MCF 10A (cell line): ENCODE measurements at regions of chr18 and their contacts with region 1.

Region 1: DNA sequence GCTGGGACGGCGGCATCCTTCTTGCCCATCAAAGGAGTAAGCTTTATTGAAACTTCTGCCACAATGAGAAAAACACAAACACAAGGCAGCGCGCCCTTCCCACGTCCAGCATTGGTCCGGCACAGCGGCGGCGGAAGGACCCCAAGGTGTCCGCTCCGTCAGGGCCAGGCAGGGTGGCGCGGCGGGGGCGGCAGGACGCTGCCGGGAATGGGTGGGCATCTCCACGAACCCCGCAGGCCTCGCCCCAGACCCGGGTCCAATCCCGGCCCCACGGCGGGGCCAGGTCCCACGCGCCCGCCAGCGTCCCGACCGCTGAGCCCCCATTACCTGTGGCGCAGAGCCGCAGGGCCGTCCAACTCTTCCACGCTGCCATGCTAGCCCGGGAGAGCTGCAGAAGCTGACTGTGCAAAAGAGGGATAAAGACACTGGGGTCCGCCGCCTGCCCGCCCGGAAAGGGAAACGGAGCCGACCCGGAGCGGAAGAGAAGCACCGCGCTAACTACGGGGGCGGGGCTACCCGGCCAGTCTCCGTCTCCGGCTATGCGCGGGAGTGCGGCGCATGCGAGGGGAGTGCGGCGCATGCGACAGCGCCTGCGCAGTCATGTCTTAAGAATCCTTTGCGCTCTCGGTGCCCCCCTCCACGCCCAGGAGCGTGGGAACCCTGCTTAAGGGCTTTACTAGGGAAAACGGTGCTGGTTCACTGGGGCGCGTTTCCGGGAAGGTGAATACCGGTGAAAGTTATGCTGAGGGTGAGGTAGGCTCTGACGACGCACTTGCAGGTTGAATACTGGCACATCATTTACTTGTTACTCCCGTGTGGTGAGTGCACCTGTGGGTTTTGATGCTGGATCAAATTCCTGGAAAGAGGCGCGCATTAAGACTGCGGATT is at the start of gene TMX3:
- DNase-seq: peak; percentile 92
- H3K4me3 Mint-ChIP-seq: peak within 1 kb of the TSS; percentile 95
- H3K27ac Mint-ChIP-seq: peak within 1 kb of the TSS; percentile 70
- H3K4me1 Mint-ChIP-seq: peaks cover 19% of the 10 kb centered on the region
- H3K27me3 Mint-ChIP-seq: no peaks in the 10 kb centered on the region
- CTCF ChIP-seq: no peak
- total RNA-seq, gene TMX3: 88.7 and 95.0 TPM in 2 replicates

Region 2: DNA sequence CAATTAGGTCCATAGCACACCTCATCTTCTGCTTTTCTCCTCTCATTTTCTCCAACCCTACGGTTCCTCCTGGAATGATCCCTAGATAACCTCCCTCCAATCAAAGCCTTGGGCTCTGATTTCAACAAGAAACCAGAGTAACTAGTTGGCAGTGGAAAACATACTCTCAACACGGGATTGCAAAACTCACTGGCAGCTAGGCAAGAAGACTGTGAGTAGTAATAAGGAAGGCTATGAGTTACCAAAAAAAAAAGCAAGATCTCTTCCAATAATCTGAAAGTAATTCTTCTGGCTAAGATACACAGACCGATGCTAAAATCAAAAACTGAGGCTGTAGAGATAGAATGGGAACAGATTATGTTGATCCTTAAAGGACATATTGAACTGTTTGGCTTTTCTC is 54.6 kb after region 1 on chr18:
- CTCF ChIA-PET with region 1: no interaction called
- POLR2A ChIA-PET with region 1: no interaction called
- intact Hi-C with region 1: no loop called
- DNase-seq: peak; percentile 24
- H3K4me3 Mint-ChIP-seq: no peak overlapping the region
- H3K27ac Mint-ChIP-seq: no peak overlapping the region
- H3K4me1 Mint-ChIP-seq: peaks cover 8% of the 10 kb centered on the region
- H3K27me3 Mint-ChIP-seq: no peaks in the 10 kb centered on the region
- CTCF ChIP-seq: no peak

Region 3: GRCh38 chr18:68840554-68841263 is 125.9 kb after region 1 on chr18:
- CTCF ChIA-PET with region 1: no interaction called
- POLR2A ChIA-PET with region 1: interaction called, 4 read pairs
- intact Hi-C with region 1: loop called (anchors 5 kb)
- DNase-seq: peak; percentile 95
- H3K4me3 Mint-ChIP-seq: peak overlapping the region; percentile 15
- H3K27ac Mint-ChIP-seq: peak overlapping the region; percentile 33
- H3K4me1 Mint-ChIP-seq: peaks cover 27% of the 10 kb centered on the region
- H3K27me3 Mint-ChIP-seq: no peaks in the 10 kb centered on the region
- CTCF ChIP-seq: no peak